CD4-positive, alpha-beta T cell (primary cell): ENCODE measurements at regions of chr1 and their contacts with region 1.

Region 1: GRCh38 chr1:15788624-15789301 is 18.7 kb downstream of the UQCRHL start:
- DNase-seq: peak in 2 of 14 experiments; percentile 41 to 54
- ATAC-seq: no peak
- H3K4me3 ChIP-seq: no peak overlapping the region
- H3K4me3 Mint-ChIP-seq: no peak overlapping the region
- H3K27ac ChIP-seq: no peak overlapping the region
- H3K27ac Mint-ChIP-seq: no peak overlapping the region
- H3K4me1 ChIP-seq: peaks cover 5% of the 10 kb centered on the region
- H3K4me1 Mint-ChIP-seq: peaks cover 4% of the 10 kb centered on the region
- H3K27me3 ChIP-seq: peaks cover 0 to 7% of the 10 kb centered on the region in 2 experiments
- H3K27me3 Mint-ChIP-seq: peaks cover 5% of the 10 kb centered on the region
- CTCF ChIP-seq: no peak

Region 2: GRCh38 chr1:15489052-15489736 is 299.6 kb before region 1 on chr1:
- CTCF ChIA-PET with region 1: no interaction called
- POLR2A ChIA-PET with region 1: no interaction called
- intact Hi-C with region 1: no loop called
- DNase-seq: no peak
- ATAC-seq: no peak
- H3K4me3 ChIP-seq: no peak overlapping the region
- H3K4me3 Mint-ChIP-seq: no peak overlapping the region
- H3K27ac ChIP-seq: no peak overlapping the region
- H3K27ac Mint-ChIP-seq: no peak overlapping the region
- H3K4me1 ChIP-seq: no peaks in the 10 kb centered on the region
- H3K4me1 Mint-ChIP-seq: no peaks in the 10 kb centered on the region
- H3K27me3 ChIP-seq: no peaks in the 10 kb centered on the region
- H3K27me3 Mint-ChIP-seq: no peaks in the 10 kb centered on the region
- CTCF ChIP-seq: no peak

Region 3: GRCh38 chr1:15885701-15886610 is 97.2 kb after region 1 on chr1:
- CTCF ChIA-PET with region 1: no interaction called
- POLR2A ChIA-PET with region 1: no interaction called
- intact Hi-C with region 1: no loop called
- DNase-seq: peak in 11 of 14 experiments; percentile 2 to 70 (median 33)
- ATAC-seq: peak; percentile 60
- H3K4me3 ChIP-seq: peak overlapping the region; percentile 26
- H3K4me3 Mint-ChIP-seq: peak overlapping the region; percentile 52
- H3K27ac ChIP-seq: no peak overlapping the region
- H3K27ac Mint-ChIP-seq: peak overlapping the region; percentile 68
- H3K4me1 ChIP-seq: peaks cover 33% of the 10 kb centered on the region
- H3K4me1 Mint-ChIP-seq: peaks cover 69% of the 10 kb centered on the region
- H3K27me3 ChIP-seq: no peaks in the 10 kb centered on the region
- H3K27me3 Mint-ChIP-seq: no peaks in the 10 kb centered on the region
- CTCF ChIP-seq: no peak

Region 4: DNA sequence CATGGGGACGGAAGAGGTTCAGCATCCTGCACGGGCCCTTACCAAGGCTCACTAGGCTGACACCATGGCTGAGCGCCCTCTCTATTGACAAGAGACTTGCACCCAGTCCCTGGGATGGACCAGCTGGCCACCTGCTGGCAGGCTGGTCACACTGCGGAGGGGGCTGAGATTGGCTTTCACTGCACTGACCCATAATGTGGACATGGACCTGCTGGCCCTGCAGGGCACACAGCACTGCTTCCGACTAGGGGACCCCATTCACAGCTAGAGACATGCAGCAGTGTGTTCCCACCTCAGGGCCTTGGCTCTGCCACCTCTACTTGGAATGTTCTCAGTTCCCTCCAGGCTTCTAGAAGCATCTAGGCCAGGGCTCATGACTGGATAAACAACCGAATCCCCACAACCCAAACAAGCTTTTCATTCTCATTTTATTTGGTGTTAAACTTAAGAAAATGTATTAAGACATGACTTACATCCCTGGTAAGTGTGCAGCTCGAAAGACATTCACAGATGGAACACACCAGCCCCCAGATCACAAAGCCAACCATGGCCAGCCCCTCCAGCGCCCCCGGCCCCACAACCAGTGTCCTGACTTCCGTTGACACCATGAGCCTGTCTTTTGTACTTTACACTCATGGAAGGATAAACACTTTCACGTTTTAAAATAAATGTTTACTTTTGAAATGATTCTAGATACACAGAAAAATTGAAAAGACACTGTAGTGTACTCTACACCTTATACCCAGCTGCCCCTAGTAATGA is 206.0 kb after region 1 on chr1:
- CTCF ChIA-PET with region 1: interaction called, 4 read pairs
- POLR2A ChIA-PET with region 1: no interaction called
- intact Hi-C with region 1: loop called (anchors 2 to 10 kb)
- DNase-seq: peak in 10 of 14 experiments; percentile 10 to 67 (median 24)
- ATAC-seq: peak; percentile 44
- H3K4me3 ChIP-seq: no peak overlapping the region
- H3K4me3 Mint-ChIP-seq: no peak overlapping the region
- H3K27ac ChIP-seq: no peak overlapping the region
- H3K27ac Mint-ChIP-seq: no peak overlapping the region
- H3K4me1 ChIP-seq: no peaks in the 10 kb centered on the region
- H3K4me1 Mint-ChIP-seq: no peaks in the 10 kb centered on the region
- H3K27me3 ChIP-seq: no peaks in the 10 kb centered on the region
- H3K27me3 Mint-ChIP-seq: no peaks in the 10 kb centered on the region
- CTCF ChIP-seq: peak; percentile 43

Region 5: DNA sequence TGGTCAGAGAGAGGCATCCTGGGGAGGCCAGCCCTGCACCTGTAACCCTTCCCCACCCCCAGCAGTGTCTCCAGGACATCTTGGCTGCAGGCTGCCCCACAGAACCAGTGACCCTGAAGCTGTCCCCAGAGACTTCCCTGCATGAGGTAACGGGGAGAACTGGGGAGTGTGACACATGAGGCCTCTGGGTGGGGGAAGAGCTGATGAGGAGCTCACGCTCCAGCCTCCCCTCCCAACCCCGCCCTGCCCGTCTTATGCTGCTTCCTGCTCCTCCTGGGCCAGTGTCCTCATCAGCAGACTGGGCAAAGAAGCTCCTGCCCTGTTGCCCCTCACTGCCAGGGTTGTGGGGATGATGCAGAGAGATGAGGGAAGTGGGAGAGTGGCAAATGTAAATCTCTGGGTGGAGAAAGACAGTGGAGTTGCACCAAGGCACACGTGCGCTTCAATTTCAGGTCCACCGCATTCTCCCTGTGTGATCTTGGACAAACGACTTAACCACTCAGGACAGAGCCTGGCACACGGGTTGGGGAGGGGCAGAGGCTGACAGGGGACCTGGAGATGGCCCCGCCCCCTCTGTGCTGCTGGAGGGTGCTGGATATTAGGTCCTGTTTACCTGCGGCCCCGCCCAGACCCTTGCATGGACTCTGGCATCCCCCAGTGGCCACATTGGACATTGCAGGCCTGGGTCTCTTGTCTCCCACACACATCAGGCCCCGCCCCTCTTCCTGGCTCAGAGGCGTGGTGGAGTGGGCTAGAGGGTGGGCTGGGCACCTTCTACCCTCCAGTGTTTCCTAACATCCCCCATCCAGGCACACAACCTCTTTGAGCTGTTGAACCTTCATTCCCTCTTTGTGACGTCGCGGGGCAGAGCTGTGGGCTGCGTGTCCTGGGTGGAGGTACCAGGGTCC is 267.1 kb after region 1 on chr1:
- CTCF ChIA-PET with region 1: no interaction called
- POLR2A ChIA-PET with region 1: no interaction called
- intact Hi-C with region 1: loop called (anchors 1 to 2 kb)
- DNase-seq: peak; percentile 51 to 91 (median 80)
- ATAC-seq: peak; percentile 99
- H3K4me3 ChIP-seq: no peak overlapping the region
- H3K4me3 Mint-ChIP-seq: no peak overlapping the region
- H3K27ac ChIP-seq: no peak overlapping the region
- H3K27ac Mint-ChIP-seq: no peak overlapping the region
- H3K4me1 ChIP-seq: peaks cover 7% of the 10 kb centered on the region
- H3K4me1 Mint-ChIP-seq: peaks cover 6% of the 10 kb centered on the region
- H3K27me3 ChIP-seq: no peaks in the 10 kb centered on the region
- H3K27me3 Mint-ChIP-seq: no peaks in the 10 kb centered on the region
- CTCF ChIP-seq: peak; percentile 85